ENCODE measurements at regions of chr16 and their contacts with region 1.

Region 1: GRCh38 chr16:1696863-1697262 is 9.1 kb upstream of the MAPK8IP3 start:
- DNase-seq: peak; percentile 74
- H3K4me3 Mint-ChIP-seq: no peak overlapping the region
- H3K27ac Mint-ChIP-seq: no peak overlapping the region
- H3K4me1 Mint-ChIP-seq: peaks cover 17% of the 10 kb centered on the region
- H3K27me3 Mint-ChIP-seq: no peaks in the 10 kb centered on the region
- CTCF ChIP-seq: no peak

Region 2: GRCh38 chr16:1474796-1475551 is 221.9 kb before region 1 on chr16 and contains the start of gene CLCN7:
- CTCF ChIA-PET with region 1: no interaction called
- POLR2A ChIA-PET with region 1: no interaction called
- intact Hi-C with region 1: no loop called
- DNase-seq: peak; percentile 83
- H3K4me3 Mint-ChIP-seq: peak within 1 kb of the TSS; percentile 72
- H3K27ac Mint-ChIP-seq: peak within 1 kb of the TSS; percentile 75
- H3K4me1 Mint-ChIP-seq: peaks cover 6% of the 10 kb centered on the region
- H3K27me3 Mint-ChIP-seq: no peaks in the 10 kb centered on the region
- CTCF ChIP-seq: no peak
- total RNA-seq, gene CLCN7: 60.0 and 69.5 TPM in 2 replicates

Region 3: DNA sequence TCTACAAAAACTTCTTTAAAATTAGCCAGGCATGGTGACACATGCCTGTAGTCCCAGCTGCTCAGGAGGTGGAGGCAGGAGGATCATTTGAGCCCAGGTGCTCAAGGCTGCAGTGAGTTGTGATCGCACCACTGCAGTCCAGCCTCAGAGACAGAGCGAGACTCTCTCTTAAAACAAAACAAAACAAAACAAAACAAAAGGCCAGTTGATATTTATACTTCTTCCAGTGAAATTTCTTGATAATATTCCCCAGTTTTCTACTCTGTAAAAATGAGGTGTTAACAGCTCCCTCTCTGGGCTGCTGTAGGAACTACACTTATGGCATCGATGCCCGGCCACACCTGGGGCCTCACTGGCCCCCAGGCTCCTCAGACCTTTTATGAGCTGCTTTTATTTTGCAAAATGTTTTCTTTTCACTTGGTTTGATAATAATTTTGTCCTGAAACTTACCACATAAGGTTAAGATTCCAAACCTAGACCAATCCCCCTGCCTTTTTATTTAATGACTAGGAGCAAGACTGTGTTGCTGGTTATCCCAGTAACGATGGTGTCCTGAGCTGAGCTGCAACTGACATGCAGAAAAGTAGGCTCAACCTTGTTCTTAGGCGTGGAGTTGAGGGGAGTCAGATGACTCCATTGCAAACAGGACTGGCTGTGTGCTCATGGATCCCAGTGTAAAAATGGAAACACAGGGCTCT is 26.7 kb after region 1 on chr16:
- CTCF ChIA-PET with region 1: interaction called, 11 read pairs
- POLR2A ChIA-PET with region 1: interaction called, 4 read pairs
- intact Hi-C with region 1: no loop called
- DNase-seq: peak; percentile 62
- H3K4me3 Mint-ChIP-seq: no peak overlapping the region
- H3K27ac Mint-ChIP-seq: no peak overlapping the region
- H3K4me1 Mint-ChIP-seq: peaks cover 6% of the 10 kb centered on the region
- H3K27me3 Mint-ChIP-seq: no peaks in the 10 kb centered on the region
- CTCF ChIP-seq: peak; percentile 62

Measured in MCF 10A (cell line).